Activated naive CD4-positive, alpha-beta T cell treated with anti-CD3 and anti-CD28 coated beads for 36 hours (primary cell): ENCODE measurements at regions of chr12 and their contacts with region 1.

Region 1: GRCh38 chr12:93098077-93098476 is 169.0 kb upstream of the EEA1 start:
- DNase-seq: peak; percentile 91
- H3K4me3 Mint-ChIP-seq: no peak overlapping the region
- H3K27ac Mint-ChIP-seq: peak overlapping the region; percentile 38
- H3K4me1 Mint-ChIP-seq: peaks cover 10% of the 10 kb centered on the region
- H3K27me3 Mint-ChIP-seq: no peaks in the 10 kb centered on the region

Region 2: DNA sequence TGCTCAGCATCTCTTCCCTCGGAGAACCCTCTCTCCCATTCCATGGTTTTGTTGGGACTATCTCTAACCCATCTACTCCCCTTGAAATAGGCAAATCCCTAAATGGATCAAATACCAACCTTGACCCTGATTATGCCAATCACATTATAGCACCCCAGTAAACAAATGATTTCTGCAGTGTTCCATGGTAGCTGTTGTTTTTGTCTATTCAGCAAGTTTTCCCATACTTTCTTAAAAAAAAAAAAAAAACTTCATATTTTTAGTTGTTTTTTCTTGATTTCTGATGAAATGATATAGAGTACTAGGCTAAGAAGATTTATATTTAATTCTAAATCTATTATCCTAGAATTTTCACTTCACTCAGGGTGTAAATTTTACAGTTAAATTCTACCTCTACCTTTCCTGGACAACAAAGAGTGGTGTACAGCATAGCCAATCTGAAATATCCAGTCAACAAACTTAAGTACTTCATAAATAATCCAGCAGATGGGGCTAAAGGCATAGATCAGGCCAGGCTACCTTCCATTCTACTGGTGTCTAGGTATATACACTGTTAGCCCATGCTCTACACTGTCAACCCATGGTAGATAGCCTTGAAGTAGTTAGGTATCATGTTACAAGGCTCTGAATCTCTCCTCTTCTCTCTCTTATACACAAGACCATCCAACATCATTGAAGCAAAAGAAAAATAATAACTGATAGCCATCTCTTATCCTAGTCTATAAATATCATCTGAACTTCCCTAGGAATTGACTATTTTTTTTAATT is 313.1 kb before region 1 on chr12:
- CTCF ChIA-PET with region 1: interaction called, 5 read pairs
- intact Hi-C with region 1: loop called (anchors 5 kb)
- DNase-seq: peak; percentile 35
- H3K4me3 Mint-ChIP-seq: no peak overlapping the region
- H3K27ac Mint-ChIP-seq: no peak overlapping the region
- H3K4me1 Mint-ChIP-seq: peaks cover 2% of the 10 kb centered on the region
- H3K27me3 Mint-ChIP-seq: no peaks in the 10 kb centered on the region

Region 3: DNA sequence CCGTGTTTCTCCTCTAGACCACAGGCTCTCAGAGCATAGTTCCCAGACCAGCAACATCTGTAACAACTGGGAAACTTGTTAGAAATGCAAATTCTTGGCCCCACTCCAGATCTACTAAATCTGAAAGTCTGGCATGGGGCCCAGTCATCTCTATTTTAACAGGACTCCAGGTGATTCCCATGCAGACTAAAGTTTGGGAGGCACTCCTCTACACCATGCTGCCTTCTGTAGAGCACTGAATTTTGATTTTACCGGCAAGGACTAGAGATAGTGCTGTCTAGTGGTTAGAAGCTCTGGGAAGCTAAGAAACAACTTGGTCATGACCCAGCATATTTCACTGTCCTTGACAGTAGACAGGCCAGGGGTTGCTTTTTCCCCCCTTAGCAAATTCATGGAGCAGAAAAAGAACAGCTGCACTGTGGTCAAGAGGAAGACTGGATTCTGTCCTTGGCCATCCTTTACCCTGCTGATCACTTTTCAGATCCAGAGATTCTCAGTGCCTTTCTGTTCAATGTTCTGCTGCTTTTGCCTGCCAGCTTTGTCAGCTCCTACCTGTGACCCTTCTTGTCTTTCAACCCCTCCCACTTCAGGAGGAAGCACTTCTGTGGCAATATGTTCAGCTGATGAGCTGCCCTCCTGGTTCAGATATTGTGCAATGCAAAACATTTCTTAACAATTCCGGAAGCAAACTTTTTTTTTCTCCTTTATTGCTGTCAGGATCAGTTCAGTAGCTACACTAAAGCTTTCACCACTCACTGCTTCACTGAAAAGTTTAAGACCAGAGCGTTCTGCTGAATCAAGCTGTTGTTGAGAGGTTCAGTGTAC is 145.8 kb after region 1 on chr12:
- CTCF ChIA-PET with region 1: interaction called, 4 read pairs
- intact Hi-C with region 1: loop called (anchors 2 kb)
- DNase-seq: peak; percentile 53
- H3K4me3 Mint-ChIP-seq: peak overlapping the region; percentile 49
- H3K27ac Mint-ChIP-seq: peak overlapping the region; percentile 82
- H3K4me1 Mint-ChIP-seq: peaks cover 34% of the 10 kb centered on the region
- H3K27me3 Mint-ChIP-seq: no peaks in the 10 kb centered on the region

Region 4: DNA sequence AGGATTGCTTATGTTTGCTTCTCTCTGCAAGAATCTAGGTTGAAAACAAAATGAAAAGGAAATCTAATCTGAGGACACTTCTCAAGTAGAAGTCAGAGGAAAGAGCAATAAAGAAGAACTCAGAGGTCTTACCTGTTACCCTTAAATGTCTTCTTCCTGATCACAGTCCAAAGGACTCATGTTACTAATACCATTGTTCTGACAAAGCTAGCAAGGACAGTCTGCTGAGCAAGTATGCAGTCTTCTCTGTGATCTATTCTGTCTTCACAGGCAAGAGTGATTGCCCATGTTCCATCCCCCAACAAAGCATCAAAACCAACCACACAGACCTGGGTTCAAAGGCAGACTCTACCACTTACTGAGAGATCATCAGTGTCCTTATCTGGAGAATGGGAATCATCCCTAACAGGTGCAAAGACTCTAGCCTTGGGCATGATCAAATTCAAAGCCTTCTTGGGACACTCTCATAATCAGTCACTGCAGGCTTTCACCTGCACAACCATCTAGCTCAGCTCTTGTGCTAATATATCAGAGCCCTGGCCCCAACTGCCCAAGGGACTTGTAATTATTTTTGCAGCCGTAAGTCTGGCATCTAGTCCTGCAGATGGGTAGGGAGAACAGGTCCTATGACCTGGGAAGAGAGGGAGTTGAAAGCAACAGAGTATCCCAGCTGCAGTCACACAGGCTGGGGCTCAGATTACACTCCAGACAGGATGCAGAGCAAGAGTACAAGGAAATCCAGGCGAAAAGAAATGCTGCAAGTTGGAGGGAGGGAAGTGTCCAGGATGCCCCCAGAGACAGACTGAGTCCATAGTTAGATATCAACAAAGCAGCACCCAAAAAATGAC is 181.7 kb after region 1 on chr12:
- CTCF ChIA-PET with region 1: interaction called, 3 read pairs
- intact Hi-C with region 1: loop called (anchors 5 kb)
- DNase-seq: no peak
- H3K4me3 Mint-ChIP-seq: no peak overlapping the region
- H3K27ac Mint-ChIP-seq: no peak overlapping the region
- H3K4me1 Mint-ChIP-seq: no peaks in the 10 kb centered on the region
- H3K27me3 Mint-ChIP-seq: no peaks in the 10 kb centered on the region

Region 5: DNA sequence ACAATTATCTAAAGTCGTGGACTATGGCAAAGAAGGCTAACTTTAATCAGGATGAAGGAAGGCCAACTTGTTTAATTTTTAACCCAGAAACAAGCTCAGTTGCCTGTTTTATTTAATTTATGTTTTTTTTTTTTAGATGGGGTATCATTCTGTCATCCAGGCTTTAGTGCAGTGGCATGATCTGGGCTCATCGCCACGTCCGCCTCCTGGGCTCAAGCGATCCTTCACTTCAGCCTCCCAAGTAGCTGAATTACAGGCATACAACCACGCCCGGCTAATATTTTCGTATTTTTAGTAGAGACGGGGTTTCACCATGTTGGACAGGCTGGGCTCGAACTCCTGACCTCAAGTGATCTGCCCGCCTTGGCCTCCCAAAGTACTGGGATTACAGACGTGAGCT is 299.3 kb after region 1 on chr12:
- CTCF ChIA-PET with region 1: interaction called, 7 read pairs
- intact Hi-C with region 1: loop called (anchors 1 kb)
- DNase-seq: no peak
- H3K4me3 Mint-ChIP-seq: no peak overlapping the region
- H3K27ac Mint-ChIP-seq: no peak overlapping the region
- H3K4me1 Mint-ChIP-seq: peaks cover 3% of the 10 kb centered on the region
- H3K27me3 Mint-ChIP-seq: no peaks in the 10 kb centered on the region

Region 6: DNA sequence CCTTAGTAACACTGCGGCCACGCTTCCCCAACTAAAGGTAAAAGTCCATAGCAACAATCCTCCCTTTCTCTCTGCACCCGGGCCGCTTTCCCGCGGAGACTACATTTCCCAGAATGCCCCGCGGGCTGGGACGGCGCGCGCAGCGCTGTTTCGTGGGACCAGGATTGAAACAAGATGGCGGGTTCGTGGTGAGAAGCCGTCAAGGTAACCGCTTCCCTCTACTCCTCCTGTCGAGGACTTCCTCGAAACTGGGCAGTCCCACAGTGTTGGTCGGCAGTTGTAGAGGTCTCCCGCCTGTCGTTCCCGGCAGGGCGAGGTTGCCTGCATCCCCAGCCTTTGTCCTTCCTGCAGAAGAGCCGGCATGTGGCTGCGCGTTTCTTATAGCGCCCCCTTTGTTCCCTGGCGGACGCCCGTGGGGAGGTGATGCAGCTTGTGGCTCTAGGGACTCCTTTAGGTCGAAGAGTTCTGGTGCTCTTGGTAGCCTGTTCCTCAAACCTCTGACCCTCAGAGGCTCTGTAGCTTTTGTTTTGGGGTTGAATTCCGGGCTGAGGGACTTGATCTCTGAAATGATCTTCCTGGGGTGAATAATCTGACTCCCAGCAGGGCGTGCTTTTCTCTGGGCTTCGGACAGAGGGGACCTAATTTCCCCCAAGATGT is 369.4 kb after region 1 on chr12 and contains the start of gene MRPL42:
- CTCF ChIA-PET with region 1: no interaction called
- intact Hi-C with region 1: loop called (anchors 5 kb)
- DNase-seq: peak; percentile 95
- H3K4me3 Mint-ChIP-seq: peak within 1 kb of the TSS; percentile 95
- H3K27ac Mint-ChIP-seq: peak within 1 kb of the TSS; percentile 91
- H3K4me1 Mint-ChIP-seq: peaks cover 32% of the 10 kb centered on the region
- H3K27me3 Mint-ChIP-seq: no peaks in the 10 kb centered on the region
- total RNA-seq, gene MRPL42: 93.8 to 95.8 TPM